Natural killer cell (primary cell): ENCODE measurements at regions of chr6 and their contacts with region 1.

Region 1: DNA sequence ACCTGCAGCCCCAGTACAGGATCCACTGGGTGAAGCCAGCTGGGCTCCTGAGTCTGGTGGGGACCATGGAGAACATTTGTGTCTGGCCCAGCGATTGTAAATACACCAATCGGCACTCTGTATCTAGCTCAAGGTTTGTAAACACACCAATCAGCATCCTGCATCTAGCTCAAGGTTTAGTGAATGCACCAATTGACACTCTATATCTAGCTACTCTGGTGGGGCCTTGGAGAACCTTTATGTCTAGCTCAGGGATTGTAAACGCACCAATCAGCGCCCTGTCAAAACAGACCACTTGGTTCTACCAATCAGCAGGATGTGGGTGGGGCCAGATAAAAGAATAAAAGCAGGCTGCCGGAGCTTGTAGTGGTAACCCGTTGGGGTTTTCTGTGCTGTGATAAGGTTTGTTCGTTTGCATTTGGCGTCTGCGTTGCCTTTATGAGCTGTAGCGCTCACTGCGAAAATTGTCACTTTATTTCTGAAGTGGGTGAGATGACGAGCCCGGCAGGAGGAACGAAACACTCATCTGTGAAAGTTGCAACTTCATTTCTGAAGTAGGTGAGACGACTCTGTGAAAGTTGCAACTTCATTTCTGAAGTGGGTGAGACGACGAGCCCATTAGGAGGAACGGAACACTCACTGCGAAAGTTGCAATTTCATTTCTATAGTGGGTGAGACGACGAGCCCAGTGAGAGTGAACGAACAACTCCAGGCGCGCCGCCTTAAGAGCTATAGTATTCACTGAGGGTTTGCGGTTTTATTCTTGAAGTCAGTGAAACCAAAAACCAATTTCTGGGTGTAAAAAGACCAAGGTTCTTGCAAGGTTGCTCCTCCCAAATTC is 31.1 kb downstream of the SERPINB6 start:
- DNase-seq: peak; percentile 64 to 89
- ATAC-seq: peak; percentile 81 to 89 (median 81)
- H3K4me3 ChIP-seq: peak overlapping the region; percentile 16
- H3K4me3 Mint-ChIP-seq: peak overlapping the region; percentile 81
- H3K27ac ChIP-seq: peak overlapping the region; percentile 66
- H3K27ac Mint-ChIP-seq: peak overlapping the region; percentile 94 to 96
- H3K4me1 ChIP-seq: peaks cover 67% of the 10 kb centered on the region
- H3K4me1 Mint-ChIP-seq: peaks cover 59 to 66% of the 10 kb centered on the region in 2 donors
- H3K27me3 ChIP-seq: no peaks in the 10 kb centered on the region
- H3K27me3 Mint-ChIP-seq: no peaks in the 10 kb centered on the region
- CTCF ChIP-seq: no peak

Region 2: DNA sequence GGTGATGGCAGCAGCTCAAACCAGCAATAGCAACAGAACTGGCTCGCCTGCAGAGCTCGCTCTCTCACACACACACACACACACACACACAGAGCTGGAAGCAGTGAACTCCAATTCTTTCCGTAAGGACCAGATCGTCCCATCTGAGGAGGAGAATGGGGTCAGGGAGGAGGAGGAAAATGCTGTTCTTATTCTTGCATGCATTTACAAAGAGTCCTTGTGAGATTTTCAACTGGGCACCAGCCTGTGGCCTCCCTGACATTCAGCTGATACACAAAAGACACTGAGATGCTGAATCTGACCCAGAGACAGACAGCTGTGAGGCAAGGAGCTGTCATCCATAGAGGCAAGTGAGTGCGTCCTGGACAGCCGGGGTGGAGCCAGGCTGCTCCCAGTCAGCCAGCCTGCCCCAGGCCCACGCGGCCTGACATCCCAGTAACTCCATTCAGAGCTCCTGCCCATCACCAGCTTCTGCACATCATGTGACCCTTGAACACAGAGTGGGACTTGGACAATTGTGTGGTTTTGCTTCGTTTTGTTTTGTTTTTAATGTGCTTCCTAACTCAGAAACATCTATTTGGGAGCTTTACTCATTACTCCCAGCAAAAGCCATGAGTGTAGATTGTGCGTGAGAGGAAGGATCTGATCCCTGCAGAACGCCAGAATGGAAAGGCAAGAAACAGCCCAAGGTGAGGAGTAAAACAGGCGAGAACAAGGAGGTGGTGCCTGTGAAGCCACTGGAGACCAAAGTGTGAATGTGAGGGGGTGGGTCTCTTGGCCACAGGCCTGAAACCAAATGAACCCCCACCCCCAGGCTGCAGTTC is 39.2 kb before region 1 on chr6:
- intact Hi-C with region 1: loop called (anchors 5 kb)
- DNase-seq: peak in 1 of 2 donors; percentile 39
- ATAC-seq: peak; percentile 17 to 36 (median 31)
- H3K4me3 ChIP-seq: peak overlapping the region; percentile 97
- H3K4me3 Mint-ChIP-seq: peak overlapping the region; percentile 99
- H3K27ac ChIP-seq: no peak overlapping the region
- H3K27ac Mint-ChIP-seq: peak overlapping the region; percentile 89 to 95
- H3K4me1 ChIP-seq: peaks cover 47% of the 10 kb centered on the region
- H3K4me1 Mint-ChIP-seq: peaks cover 55 to 56% of the 10 kb centered on the region in 2 donors
- H3K27me3 ChIP-seq: no peaks in the 10 kb centered on the region
- H3K27me3 Mint-ChIP-seq: no peaks in the 10 kb centered on the region
- CTCF ChIP-seq: no peak

Region 3: DNA sequence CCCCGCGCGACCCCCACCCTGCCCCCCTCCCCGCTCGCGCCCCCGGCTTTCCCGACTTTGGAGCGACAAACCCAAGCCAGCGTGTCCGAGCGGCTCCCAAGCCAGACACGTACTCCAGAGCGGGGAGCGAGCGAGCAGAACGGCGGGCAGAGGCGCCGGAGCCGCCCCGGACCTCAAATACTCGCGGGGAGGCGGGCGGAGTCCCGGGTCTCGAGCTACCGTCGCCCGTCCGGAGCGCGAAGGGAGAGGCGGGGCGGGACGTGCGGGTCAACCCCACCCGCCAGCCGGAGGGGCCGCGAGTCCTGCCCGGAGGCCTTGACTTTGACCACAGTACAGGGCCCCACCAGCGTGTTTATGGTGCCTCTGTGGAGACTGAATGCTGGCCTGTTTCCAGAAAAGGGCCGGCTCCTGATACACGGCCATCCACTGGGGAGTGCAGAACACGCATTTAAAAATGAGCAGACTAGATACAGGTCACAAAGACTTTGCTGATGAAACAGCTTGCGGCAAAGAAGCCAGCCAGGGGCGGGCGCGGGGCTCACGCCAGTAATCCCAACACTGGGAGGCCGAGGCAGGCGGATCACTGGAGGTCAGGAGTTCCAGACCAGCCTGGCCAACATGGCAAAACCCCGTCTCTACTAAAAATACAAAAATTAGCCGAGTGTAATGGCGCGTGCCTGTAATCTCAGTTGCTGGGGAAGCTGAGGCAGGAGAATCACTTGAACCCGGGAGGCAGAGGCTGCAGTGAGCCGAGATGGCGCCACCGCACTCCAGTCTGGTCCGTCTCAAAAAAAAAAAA is 31.4 kb after region 1 on chr6 and contains the start of gene SERPINB6:
- intact Hi-C with region 1: loop called (anchors 1 kb)
- DNase-seq: peak; percentile 48 to 67
- ATAC-seq: peak; percentile 54 to 67 (median 62)
- H3K4me3 ChIP-seq: peak within 1 kb of the TSS; percentile 60
- H3K4me3 Mint-ChIP-seq: peak within 1 kb of the TSS; percentile 90
- H3K27ac ChIP-seq: peak within 1 kb of the TSS; percentile 77
- H3K27ac Mint-ChIP-seq: peak within 1 kb of the TSS; percentile 87 to 91
- H3K4me1 ChIP-seq: peaks cover 26% of the 10 kb centered on the region
- H3K4me1 Mint-ChIP-seq: peaks cover 62 to 72% of the 10 kb centered on the region in 2 donors
- H3K27me3 ChIP-seq: no peaks in the 10 kb centered on the region
- H3K27me3 Mint-ChIP-seq: no peaks in the 10 kb centered on the region
- CTCF ChIP-seq: no peak
- total RNA-seq, gene SERPINB6: 120 to 135 (median 129) TPM

Region 4: DNA sequence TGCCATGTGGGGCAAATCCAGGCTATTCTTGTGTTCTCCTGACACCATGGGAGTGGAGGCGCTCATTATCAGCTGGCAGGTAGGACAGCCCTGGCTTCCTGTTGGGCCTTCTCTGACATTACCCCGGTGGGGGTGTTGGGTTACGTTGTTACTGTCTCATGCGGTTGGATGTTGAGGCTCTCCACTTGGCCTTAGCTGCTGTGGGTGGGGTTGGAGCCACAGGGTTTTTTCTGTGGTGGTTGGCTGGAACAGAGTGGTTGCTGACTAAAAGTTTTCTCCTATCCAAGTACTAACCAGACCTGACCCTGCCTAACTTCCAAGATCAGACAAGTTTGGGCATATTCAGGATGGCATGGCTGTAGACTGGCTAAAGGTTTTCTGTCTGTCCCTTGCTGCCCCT is 148.2 kb after region 1 on chr6:
- intact Hi-C with region 1: no loop called
- DNase-seq: no peak
- ATAC-seq: peak; percentile 71 to 92 (median 83)
- H3K4me3 ChIP-seq: no peak overlapping the region
- H3K4me3 Mint-ChIP-seq: no peak overlapping the region
- H3K27ac ChIP-seq: peak overlapping the region; percentile 23
- H3K27ac Mint-ChIP-seq: peak overlapping the region; percentile 56 to 82
- H3K4me1 ChIP-seq: peaks cover 13% of the 10 kb centered on the region
- H3K4me1 Mint-ChIP-seq: peaks cover 32 to 53% of the 10 kb centered on the region in 2 donors
- H3K27me3 ChIP-seq: no peaks in the 10 kb centered on the region
- H3K27me3 Mint-ChIP-seq: no peaks in the 10 kb centered on the region
- CTCF ChIP-seq: no peak